ENCODE measurements at regions of chr7 and their contacts with region 1.

Region 1: DNA sequence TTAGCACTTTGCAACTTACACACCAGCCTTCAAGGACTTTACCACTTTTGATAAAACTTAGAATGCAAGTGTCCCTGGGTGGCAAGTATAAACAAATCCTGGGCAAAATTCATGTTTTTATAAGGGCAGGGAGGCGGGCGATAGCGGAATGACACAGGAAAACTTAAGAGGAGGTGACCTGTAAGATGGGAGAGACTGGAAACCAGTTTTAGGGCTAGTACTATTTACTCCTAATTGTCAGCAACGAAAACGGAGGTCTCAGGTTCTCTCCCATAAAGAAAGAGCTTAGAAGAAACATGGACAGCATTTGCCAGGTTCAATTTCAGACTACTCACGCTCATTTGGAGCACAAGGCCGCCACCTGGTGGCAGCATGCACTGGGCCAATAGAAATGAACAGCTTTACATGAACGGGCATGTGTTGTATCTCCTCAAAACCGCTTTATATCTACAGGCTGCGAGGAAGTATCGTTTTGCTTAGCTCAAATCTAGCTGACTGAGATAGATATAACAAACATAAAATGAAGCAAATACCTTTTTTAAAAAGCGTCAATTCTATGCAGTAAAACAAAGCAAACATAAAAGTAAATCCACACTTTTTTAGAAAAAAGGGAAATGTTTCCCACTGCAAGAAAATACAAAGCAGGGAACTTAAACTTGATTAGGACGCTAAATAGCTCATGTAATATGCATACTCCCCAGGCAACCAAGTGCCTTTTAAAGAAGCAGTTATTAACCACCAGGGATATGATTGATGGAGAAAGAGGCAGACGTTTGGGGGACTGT is 37.6 kb upstream of the SVOPL start:
- DNase-seq: peak; percentile 69 to 96 (median 92)
- ATAC-seq: peak; percentile 88
- H3K4me3 ChIP-seq: no peak overlapping the region
- H3K4me1 ChIP-seq: no peaks in the 10 kb centered on the region
- CTCF ChIP-seq: peak; percentile 76

Region 2: GRCh38 chr7:138161600-138162081 is 577.1 kb before region 1 on chr7:
- intact Hi-C with region 1: loop called in 1 of 2 experiments (anchors 5 kb)
- DNase-seq: peak; percentile 57 to 94 (median 63)
- ATAC-seq: peak; percentile 98
- H3K4me3 ChIP-seq: no peak overlapping the region
- H3K4me1 ChIP-seq: no peaks in the 10 kb centered on the region
- CTCF ChIP-seq: peak; percentile 32

Region 3: DNA sequence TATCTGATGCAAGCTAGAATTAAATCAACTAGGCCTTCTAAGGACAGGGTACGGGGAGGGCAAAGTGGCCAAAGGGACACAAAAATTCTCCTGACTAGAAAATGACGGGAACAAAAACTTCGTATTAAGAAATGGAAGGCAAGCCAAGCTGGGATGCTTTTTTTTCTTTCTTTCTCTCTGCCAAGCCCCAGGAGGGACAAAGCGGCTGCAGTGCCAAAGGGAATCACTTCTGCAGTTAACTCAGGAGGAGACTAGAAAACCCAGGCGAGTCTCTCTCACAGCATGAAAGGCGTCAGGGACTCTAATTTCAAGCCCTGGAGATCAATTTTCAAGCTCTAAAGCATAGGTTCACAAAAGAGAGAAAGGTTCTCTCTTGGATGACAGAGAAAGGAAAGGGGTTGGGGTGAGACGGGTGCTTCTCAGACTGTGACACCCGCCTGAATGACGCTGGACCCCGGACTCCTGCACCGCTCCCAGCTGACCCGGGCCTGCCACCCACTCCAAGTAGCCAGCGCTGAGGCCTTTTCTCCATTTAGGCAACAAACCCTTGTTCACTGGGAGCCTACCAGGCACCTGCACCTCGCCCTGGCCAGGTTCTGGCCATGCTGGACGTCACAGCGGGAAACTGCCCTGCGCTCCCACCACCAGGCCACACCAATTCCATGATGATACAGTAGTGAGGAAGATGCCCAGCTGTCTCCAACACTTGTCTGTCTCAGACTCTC is 185.9 kb after region 1 on chr7:
- intact Hi-C with region 1: no loop called
- DNase-seq: no peak
- ATAC-seq: no peak
- H3K4me3 ChIP-seq: no peak overlapping the region
- H3K4me1 ChIP-seq: no peaks in the 10 kb centered on the region
- CTCF ChIP-seq: no peak